Activated T-helper 1 cell treated with anti-CD3 and anti-CD28 coated beads, Interleukin-12 subunit alpha, Interleukin-12 subunit beta, Interleukin-2, Interleukin-4 antibody, amounts not matched to agents 30 ng/mL and 10 ng/mL and 1 ng/mL, durations not matched to agents 14 hours and 24 hours and 36 hours (primary cell): ENCODE measurements at regions of chr2 and their contacts with region 1.

Region 1: GRCh38 chr2:60926737-60927552 is 45.6 kb downstream of the REL start:
- DNase-seq: no peak
- H3K4me3 Mint-ChIP-seq: no peak overlapping the region
- H3K27ac Mint-ChIP-seq: no peak overlapping the region
- H3K4me1 Mint-ChIP-seq: peaks cover 17% of the 10 kb centered on the region
- H3K27me3 Mint-ChIP-seq: no peaks in the 10 kb centered on the region

Region 2: GRCh38 chr2:60906395-60906794 is 20.6 kb before region 1 on chr2:
- intact Hi-C with region 1: loop called (anchors 2 kb)
- DNase-seq: no peak
- H3K4me3 Mint-ChIP-seq: no peak overlapping the region
- H3K27ac Mint-ChIP-seq: peak overlapping the region; percentile 51
- H3K4me1 Mint-ChIP-seq: peaks cover 12% of the 10 kb centered on the region
- H3K27me3 Mint-ChIP-seq: no peaks in the 10 kb centered on the region